Right ventricle myocardium inferior (tissue), 1 donor: ENCODE measurements at regions of chr22 and their contacts with region 1.

Region 1: DNA sequence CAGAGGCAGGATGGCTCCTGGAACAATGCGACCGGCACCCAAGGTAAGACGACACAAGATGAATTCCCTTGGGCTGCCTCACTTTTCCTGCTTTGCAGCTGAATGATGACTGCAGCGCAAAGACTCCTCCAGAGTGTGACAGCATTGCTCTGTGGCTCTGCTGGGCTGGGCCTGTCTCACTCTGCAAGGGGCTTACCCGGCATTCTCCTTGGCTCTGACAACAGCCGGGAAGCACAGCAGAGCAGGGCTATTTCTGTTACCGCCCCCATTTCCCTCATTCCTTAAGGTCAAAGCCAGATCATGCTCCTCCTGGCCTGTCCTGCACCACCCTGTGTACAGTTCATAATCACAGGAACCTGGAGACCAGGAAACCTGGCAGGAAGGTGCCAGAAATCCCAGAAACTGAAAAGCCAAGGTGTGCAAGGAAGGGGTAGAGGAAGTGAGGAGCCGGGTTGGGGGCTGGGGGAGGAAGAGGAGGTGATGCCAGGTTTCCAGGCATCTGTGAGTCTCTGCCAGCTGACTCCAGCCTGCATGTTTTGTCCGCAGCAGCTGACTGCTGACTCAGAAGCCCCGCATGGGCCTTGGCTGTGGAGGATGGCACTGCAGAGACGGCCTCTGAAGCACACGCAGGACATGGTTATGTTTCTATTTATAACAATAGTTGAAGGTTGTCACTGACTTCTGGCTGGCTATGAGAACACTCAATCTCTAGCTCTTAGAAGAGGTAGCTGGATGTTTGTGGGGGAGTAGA is 113.6 kb downstream of the MICAL3 start:
- DNase-seq: peak; percentile 82
- ATAC-seq: peak; percentile 87

Region 2: DNA sequence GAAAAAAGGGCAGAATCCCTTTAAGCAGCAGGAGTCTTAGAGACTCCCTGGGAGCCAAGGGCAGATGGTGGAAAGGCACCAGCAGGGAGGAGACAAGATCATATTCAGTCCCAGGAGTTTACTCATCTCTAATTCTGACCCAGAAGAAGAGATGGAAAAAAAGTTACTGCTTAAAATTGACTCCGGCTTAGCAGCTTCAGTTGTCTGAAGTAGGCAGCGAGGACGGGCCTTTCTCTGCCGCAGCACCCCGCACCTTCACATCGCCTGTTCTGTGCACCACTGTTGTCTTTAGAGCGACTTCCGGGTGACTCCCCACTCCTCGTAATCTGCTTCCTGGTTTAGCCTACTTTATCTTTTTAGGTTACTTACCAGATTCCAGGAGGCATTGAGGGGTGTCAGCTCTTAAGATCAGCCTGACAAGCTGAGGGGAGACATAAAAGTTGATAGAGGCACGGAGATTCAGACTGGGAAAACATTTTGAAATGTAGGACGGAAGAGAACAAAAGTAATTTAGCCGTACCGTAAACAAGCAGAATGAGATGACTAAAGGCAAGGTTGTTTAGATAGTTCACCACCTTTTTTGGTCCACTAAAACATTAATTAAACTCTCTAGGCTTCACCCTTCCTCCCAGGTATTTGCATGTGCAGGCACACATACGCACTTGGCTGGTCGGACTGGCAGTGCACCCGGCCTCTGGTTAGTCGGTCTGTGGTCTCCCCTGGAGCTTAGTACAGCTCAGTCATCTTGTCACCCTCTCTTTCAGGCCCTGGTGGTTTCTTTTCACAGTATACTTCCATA is 467.1 kb before region 1 on chr22:
- intact Hi-C with region 1: no loop called
- DNase-seq: no peak
- ATAC-seq: no peak

Region 3: DNA sequence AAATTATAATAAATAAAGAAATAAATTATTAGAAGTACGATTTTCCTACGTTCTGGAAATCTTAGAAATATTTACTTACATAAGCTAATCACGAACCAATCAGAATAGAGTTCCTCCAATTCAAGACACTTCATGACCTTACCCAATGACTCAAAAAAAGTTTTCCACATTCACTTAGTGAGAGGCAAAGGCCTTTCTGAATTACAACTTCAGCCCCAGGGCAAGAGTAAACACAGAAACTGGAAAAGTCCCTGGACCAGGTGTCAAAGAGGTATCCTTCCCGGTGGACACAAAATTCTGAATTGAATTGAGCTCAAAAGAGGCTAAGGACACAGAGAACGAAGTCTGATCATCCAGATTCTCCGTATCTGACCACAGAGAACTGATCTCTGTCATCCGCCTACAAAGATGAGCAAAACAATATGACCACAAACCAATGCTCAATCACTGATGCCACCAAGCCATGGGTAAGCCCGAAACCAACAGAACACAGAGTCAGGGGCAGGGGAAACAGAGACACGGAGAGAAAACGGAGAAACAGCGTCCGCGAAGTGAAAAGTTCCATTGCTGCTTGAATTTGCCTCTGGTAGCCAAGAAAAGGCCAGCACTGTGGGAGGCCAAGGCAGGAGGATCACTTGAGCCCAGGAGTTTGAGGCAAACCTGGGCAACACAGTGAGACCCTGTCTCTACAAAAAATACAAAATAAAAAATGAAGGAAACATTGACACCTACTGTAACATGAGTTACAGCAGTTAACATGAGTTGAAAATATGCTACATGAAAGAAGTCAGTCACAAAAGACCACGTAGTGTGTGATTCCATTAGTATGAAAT is 143.3 kb before region 1 on chr22:
- intact Hi-C with region 1: no loop called
- DNase-seq: no peak
- ATAC-seq: no peak

Region 4: GRCh38 chr22:17950651-17951214 is 40.0 kb after region 1 on chr22:
- intact Hi-C with region 1: loop called (anchors 5 kb)
- DNase-seq: no peak
- ATAC-seq: peak; percentile 62

Region 5: DNA sequence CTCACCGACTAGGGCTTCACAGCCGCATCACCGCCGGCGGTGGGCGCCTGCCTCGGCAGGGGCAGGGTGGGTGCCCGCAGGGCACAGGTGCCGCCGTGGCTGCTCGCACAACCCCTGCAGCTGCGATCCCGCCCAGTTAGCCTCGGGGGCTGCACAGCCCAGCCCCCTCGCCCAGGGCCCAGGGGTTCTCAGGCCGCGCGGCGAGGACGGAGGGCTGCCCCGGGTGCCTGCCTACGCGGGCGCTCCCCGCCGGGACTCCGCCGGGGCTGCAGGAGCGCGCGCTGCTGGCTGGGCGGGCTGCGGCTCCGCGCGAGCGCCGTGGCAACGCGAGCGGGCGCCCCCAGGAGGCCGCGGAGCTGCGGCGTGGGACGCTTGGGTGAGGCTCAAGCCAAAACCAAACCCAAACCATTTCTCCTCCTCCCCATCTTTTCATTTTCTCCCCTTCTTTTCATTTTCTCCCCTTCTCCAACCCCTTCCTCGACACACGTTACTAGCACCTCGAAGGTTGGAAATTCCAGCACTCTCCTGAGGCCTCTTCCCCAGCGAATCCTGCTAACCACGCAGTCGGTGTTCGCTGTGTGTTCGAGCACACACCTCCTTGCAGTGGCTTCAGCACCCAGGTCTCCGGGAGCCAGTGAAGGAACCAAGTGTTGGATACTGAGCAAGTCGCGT is 113.7 kb after region 1 on chr22 and contains the start of gene MICAL3:
- intact Hi-C with region 1: loop called (anchors 2 kb)
- DNase-seq: no peak
- ATAC-seq: peak; percentile 84
- total RNA-seq, gene MICAL3: 85.7 TPM